BJ (cell line): ENCODE measurements at regions of chr17 and their contacts with region 1.

Region 1: DNA sequence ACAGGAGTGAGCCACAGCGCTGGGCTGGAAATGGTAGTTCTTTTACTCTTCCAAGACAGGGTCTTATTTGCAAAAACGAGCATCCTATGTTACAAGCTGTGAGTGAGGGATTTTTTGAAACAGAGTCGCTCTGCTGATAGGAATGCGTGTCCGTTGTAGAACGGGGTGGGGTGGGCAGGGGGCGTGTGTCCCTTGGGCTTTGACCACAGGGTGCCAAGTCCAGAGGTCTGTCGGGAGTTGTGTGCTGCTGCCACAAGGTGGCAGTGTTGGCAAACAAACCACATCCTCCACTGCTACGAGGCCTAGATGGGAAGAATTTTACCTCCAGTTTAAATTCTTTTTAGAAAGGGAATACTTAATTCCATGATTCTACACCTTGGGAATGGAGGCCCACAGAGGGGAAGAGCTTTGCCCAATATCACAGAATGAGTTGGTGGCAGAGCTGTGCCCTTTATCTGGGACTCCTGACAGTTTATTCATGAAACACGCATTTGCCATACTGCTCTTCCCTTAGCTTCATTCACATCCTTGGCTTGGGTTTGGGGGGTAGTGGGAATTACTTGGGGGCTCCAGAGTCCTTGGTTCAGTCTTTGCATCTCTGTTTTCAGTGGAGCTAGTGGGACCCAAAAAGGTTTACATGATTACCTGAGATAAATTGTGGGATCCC is 30.6 kb upstream of the ETV4 start:
- DNase-seq: no peak
- H3K4me3 ChIP-seq: no peak overlapping the region
- H3K27me3 ChIP-seq: peaks cover 1% of the 10 kb centered on the region; the same call in 1 of the 2 replicates
- CTCF ChIP-seq: peak; percentile 90

Region 2: GRCh38 chr17:43467981-43468581 is 108.6 kb before region 1 on chr17:
- CTCF ChIA-PET with region 1: no interaction called
- POLR2A ChIA-PET with region 1: no interaction called
- DNase-seq: peak; percentile 93
- H3K4me3 ChIP-seq: no peak overlapping the region
- H3K27me3 ChIP-seq: no peaks in the 10 kb centered on the region; the same call in 1 of the 2 replicates
- CTCF ChIP-seq: no peak

Region 3: GRCh38 chr17:43524945-43525575 is 51.6 kb before region 1 on chr17:
- CTCF ChIA-PET with region 1: interaction called, 42 read pairs
- POLR2A ChIA-PET with region 1: no interaction called
- DNase-seq: no peak
- H3K4me3 ChIP-seq: no peak overlapping the region
- H3K27me3 ChIP-seq: no peaks in the 10 kb centered on the region
- CTCF ChIP-seq: no peak

Region 4: GRCh38 chr17:43536236-43536992 is 40.3 kb before region 1 on chr17:
- CTCF ChIA-PET with region 1: interaction called, 16 read pairs
- POLR2A ChIA-PET with region 1: no interaction called
- DNase-seq: no peak
- H3K4me3 ChIP-seq: no peak overlapping the region
- H3K27me3 ChIP-seq: no peaks in the 10 kb centered on the region
- CTCF ChIP-seq: no peak

Region 5: DNA sequence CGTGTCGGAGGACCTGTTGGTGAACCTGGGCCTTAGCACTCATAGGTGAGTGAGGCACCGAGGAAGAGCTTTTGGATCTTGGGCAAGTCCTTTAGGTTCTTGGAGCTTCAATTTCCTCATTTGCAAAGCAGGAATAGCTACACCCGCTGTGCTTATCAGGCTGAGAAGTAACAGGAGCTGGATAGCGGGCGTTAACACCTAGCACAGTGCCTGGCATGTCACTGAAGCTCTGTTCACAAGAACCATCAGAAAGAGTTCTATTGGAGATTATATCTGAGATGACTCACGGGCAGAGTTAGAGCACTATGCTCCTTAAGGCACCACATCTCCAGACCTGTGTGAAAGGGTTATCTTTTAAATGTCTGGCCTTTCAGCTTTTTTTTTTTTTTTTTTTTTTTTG is 72.2 kb after region 1 on chr17:
- CTCF ChIA-PET with region 1: interaction called, 34 read pairs
- POLR2A ChIA-PET with region 1: no interaction called
- DNase-seq: no peak
- H3K4me3 ChIP-seq: no peak overlapping the region
- H3K27me3 ChIP-seq: no peaks in the 10 kb centered on the region
- CTCF ChIP-seq: no peak

Region 6: GRCh38 chr17:43661699-43662412 is 85.2 kb after region 1 on chr17 and contains the start of gene MEOX1:
- CTCF ChIA-PET with region 1: interaction called, 13 read pairs
- POLR2A ChIA-PET with region 1: interaction called, 7 read pairs
- DNase-seq: peak; percentile 41
- H3K4me3 ChIP-seq: no peak within 1 kb of the TSS
- H3K27me3 ChIP-seq: peaks cover 3% of the 10 kb centered on the region; the same call in 1 of the 2 replicates
- CTCF ChIP-seq: no peak
- polyA plus RNA-seq, gene MEOX1: not detected in 2 replicates

Region 7: GRCh38 chr17:43803758-43804157 is 227.1 kb after region 1 on chr17:
- CTCF ChIA-PET with region 1: no interaction called
- POLR2A ChIA-PET with region 1: no interaction called
- DNase-seq: no peak
- H3K4me3 ChIP-seq: no peak overlapping the region
- H3K27me3 ChIP-seq: no peaks in the 10 kb centered on the region
- CTCF ChIP-seq: no peak

Region 8: GRCh38 chr17:43832976-43833829 is 256.5 kb after region 1 on chr17 and contains the start of gene MPP3:
- CTCF ChIA-PET with region 1: no interaction called
- POLR2A ChIA-PET with region 1: no interaction called
- DNase-seq: no peak
- H3K4me3 ChIP-seq: peak within 1 kb of the TSS; percentile 64
- H3K27me3 ChIP-seq: no peaks in the 10 kb centered on the region
- CTCF ChIP-seq: no peak
- polyA plus RNA-seq, gene MPP3: 4.6 and 7.9 TPM in 2 replicates

Region 9: GRCh38 chr17:44053125-44053872 is 476.6 kb after region 1 on chr17:
- CTCF ChIA-PET with region 1: no interaction called
- POLR2A ChIA-PET with region 1: no interaction called
- DNase-seq: no peak
- H3K4me3 ChIP-seq: no peak overlapping the region
- H3K27me3 ChIP-seq: no peaks in the 10 kb centered on the region
- CTCF ChIP-seq: no peak